ENCODE measurements at regions of chr6 and their contacts with region 1.

Region 1: GRCh38 chr6:11929241-11929850 is 82.8 kb upstream of the HIVEP1 start:
- DNase-seq: no peak
- ATAC-seq: no peak
- H3K4me3 ChIP-seq: no peak overlapping the region
- H3K27ac ChIP-seq: peak overlapping the region; percentile 94
- H3K4me1 ChIP-seq: peaks cover 24% of the 10 kb centered on the region in 2 experiments; a peak in 4 of 5 replicates
- H3K27me3 ChIP-seq: no peaks in the 10 kb centered on the region
- CTCF ChIP-seq: no peak
- EP300 ChIP-seq: no peak
- POLR2A ChIP-seq: no peak
- RAD21 ChIP-seq: no peak

Region 2: GRCh38 chr6:11833626-11834592 is 95.4 kb before region 1 on chr6:
- CTCF ChIA-PET with region 1: no interaction called
- POLR2A ChIA-PET with region 1: no interaction called
- in situ Hi-C with region 1: no loop called
- intact Hi-C with region 1: loop called (anchors 5 kb)
- DNase-seq: peak; percentile 28 to 90 (median 58)
- ATAC-seq: peak; percentile 91
- H3K4me3 ChIP-seq: peak overlapping the region; percentile 6; the same call in 1 of the 2 replicates
- H3K27ac ChIP-seq: peak overlapping the region; percentile 74
- H3K4me1 ChIP-seq: peaks cover 14 to 33% of the 10 kb centered on the region in 2 experiments; a peak in 4 of 5 replicates
- H3K27me3 ChIP-seq: no peaks in the 10 kb centered on the region
- CTCF ChIP-seq: no peak
- EP300 ChIP-seq: peak; percentile 92
- POLR2A ChIP-seq: no peak
- RAD21 ChIP-seq: peak in 1 of 2 experiments; percentile 22; a peak in 1 of 4 replicates

Region 3: GRCh38 chr6:11956781-11957180 is 27.4 kb after region 1 on chr6:
- CTCF ChIA-PET with region 1: no interaction called
- POLR2A ChIA-PET with region 1: no interaction called
- in situ Hi-C with region 1: no loop called
- intact Hi-C with region 1: no loop called
- DNase-seq: no peak
- ATAC-seq: no peak
- H3K4me3 ChIP-seq: no peak overlapping the region
- H3K27ac ChIP-seq: no peak overlapping the region
- H3K4me1 ChIP-seq: no peaks in the 10 kb centered on the region; a peak in 3 of 5 replicates
- H3K27me3 ChIP-seq: no peaks in the 10 kb centered on the region
- CTCF ChIP-seq: no peak
- EP300 ChIP-seq: no peak
- POLR2A ChIP-seq: no peak
- RAD21 ChIP-seq: no peak

Region 4: GRCh38 chr6:11975353-11975977 is 46.1 kb after region 1 on chr6:
- CTCF ChIA-PET with region 1: no interaction called
- POLR2A ChIA-PET with region 1: no interaction called
- in situ Hi-C with region 1: no loop called
- intact Hi-C with region 1: loop called (anchors 5 kb)
- DNase-seq: peak; percentile 33 to 73 (median 54)
- ATAC-seq: peak; percentile 77
- H3K4me3 ChIP-seq: no peak overlapping the region
- H3K27ac ChIP-seq: peak overlapping the region; percentile 15; the same call in 1 of the 3 replicates
- H3K4me1 ChIP-seq: peaks cover 3 to 22% of the 10 kb centered on the region in 2 experiments; a peak in 4 of 5 replicates
- H3K27me3 ChIP-seq: no peaks in the 10 kb centered on the region
- CTCF ChIP-seq: no peak
- EP300 ChIP-seq: peak; percentile 45; the same call in 1 of the 2 replicates
- POLR2A ChIP-seq: no peak
- RAD21 ChIP-seq: 0 out of 4 replicates have a peak, but pooled peaks of 1 of the 2 experiments have one; percentile 10

Region 5: DNA sequence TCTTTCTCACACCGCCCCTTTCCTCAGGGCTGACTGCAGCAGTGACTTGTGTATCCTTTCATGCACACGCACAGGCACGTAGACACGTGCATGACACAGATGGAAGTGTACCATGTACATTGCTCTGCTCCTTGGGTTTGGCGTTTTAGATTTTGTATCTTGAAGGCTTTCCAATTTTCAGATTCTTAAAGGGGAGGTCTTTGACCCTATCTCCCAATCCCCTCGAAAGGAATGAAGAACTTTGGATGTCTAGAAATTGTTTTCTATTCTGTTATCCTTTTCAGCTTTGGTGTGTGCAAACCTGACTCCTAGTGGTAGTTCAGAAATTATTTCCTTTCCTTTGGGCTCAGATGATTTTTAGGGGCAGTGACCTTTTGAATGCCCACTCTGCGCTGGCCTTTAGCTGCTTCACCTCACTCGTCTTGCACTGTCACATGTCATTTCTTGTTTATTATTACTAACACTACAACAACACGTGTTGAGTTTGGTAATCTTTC is 145.8 kb after region 1 on chr6:
- CTCF ChIA-PET with region 1: no interaction called
- POLR2A ChIA-PET with region 1: interaction called, 3 read pairs
- in situ Hi-C with region 1: no loop called
- intact Hi-C with region 1: loop called (anchors 5 kb)
- DNase-seq: peak in 2 of 4 experiments; percentile 40 to 47
- ATAC-seq: peak; percentile 74
- H3K4me3 ChIP-seq: no peak overlapping the region
- H3K27ac ChIP-seq: no peak overlapping the region
- H3K4me1 ChIP-seq: peaks cover 0 to 14% of the 10 kb centered on the region in 2 experiments; a peak in 3 of 5 replicates
- H3K27me3 ChIP-seq: no peaks in the 10 kb centered on the region
- CTCF ChIP-seq: peak; percentile 51 to 72 (median 57); a peak in 5 of 6 replicates
- EP300 ChIP-seq: no peak
- POLR2A ChIP-seq: no peak
- RAD21 ChIP-seq: peak; percentile 73 to 80

Region 6: DNA sequence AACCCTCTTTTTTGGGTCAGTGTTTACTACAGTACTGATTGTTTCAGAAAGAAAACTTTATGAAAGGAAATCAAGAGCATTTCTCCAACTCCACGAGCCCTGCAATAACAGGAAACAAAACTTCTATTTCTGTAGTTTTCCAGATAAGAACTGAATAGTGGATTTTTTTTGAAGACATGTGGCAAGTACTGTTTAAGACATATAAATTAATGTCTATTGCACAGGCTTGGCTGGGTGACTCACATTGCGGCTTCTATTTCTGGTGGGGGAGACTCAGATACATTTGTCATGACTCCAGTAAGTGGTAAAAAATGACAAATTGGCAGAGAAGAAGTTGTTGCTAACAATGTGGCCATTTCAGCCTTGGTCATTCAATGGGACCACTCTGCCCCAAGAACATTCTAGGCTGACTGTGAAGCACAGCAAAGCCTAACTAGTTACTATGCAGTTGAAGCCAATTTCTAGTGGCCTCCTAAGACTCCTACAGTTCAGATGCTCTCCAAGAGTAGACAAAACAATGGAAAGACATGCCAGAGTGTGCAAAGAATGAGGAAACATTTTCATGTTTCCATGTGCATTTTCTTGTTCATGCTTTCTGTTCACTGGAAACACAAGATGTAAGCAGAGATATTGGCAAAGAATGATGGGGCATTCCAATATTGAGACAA is 561.7 kb after region 1 on chr6:
- CTCF ChIA-PET with region 1: no interaction called
- POLR2A ChIA-PET with region 1: no interaction called
- in situ Hi-C with region 1: no loop called
- intact Hi-C with region 1: no loop called
- DNase-seq: no peak
- ATAC-seq: no peak
- H3K4me3 ChIP-seq: no peak overlapping the region
- H3K27ac ChIP-seq: no peak overlapping the region
- H3K4me1 ChIP-seq: no peaks in the 10 kb centered on the region
- H3K27me3 ChIP-seq: no peaks in the 10 kb centered on the region
- CTCF ChIP-seq: no peak
- EP300 ChIP-seq: no peak
- POLR2A ChIP-seq: no peak
- RAD21 ChIP-seq: no peak